CD4-positive, alpha-beta memory T cell (primary cell): ENCODE measurements at regions of chr1 and their contacts with region 1.

Region 1: GRCh38 chr1:169694304-169695075 is 16.9 kb downstream of the SELL start:
- DNase-seq: peak; percentile 76 to 84 (median 79)
- H3K4me3 ChIP-seq: no peak overlapping the region
- H3K4me3 Mint-ChIP-seq: peak overlapping the region; percentile 55 to 83 (median 68)
- H3K27ac ChIP-seq: peak overlapping the region; percentile 43
- H3K27ac Mint-ChIP-seq: peak overlapping the region in 6 of 7 donors; percentile 90 to 95 (median 92)
- H3K4me1 ChIP-seq: peaks cover 99% of the 10 kb centered on the region
- H3K4me1 Mint-ChIP-seq: peaks cover 81 to 97% (median 88%) of the 10 kb centered on the region in 4 donors
- H3K27me3 ChIP-seq: no peaks in the 10 kb centered on the region
- H3K27me3 Mint-ChIP-seq: no peaks in the 10 kb centered on the region

Region 2: GRCh38 chr1:167849666-167850065 is 1844.8 kb before region 1 on chr1:
- CTCF ChIA-PET with region 1: no interaction called
- POLR2A ChIA-PET with region 1: no interaction called
- intact Hi-C with region 1: no loop called
- DNase-seq: no peak
- H3K4me3 ChIP-seq: no peak overlapping the region
- H3K4me3 Mint-ChIP-seq: no peak overlapping the region
- H3K27ac ChIP-seq: no peak overlapping the region
- H3K27ac Mint-ChIP-seq: no peak overlapping the region
- H3K4me1 ChIP-seq: no peaks in the 10 kb centered on the region
- H3K4me1 Mint-ChIP-seq: no peaks in the 10 kb centered on the region
- H3K27me3 ChIP-seq: no peaks in the 10 kb centered on the region
- H3K27me3 Mint-ChIP-seq: peaks cover 0 to 5% of the 10 kb centered on the region in 2 donors

Region 3: GRCh38 chr1:169106095-169106920 is 588.2 kb before region 1 on chr1 and contains the start of gene ATP1B1:
- CTCF ChIA-PET with region 1: no interaction called
- POLR2A ChIA-PET with region 1: no interaction called
- intact Hi-C with region 1: no loop called
- DNase-seq: peak; percentile 72 to 84 (median 78)
- H3K4me3 ChIP-seq: peak within 1 kb of the TSS; percentile 57 to 70
- H3K4me3 Mint-ChIP-seq: peak within 1 kb of the TSS; percentile 78 to 97 (median 90)
- H3K27ac ChIP-seq: peak within 1 kb of the TSS; percentile 23
- H3K27ac Mint-ChIP-seq: peak within 1 kb of the TSS; percentile 58 to 88 (median 78)
- H3K4me1 ChIP-seq: peaks cover 27% of the 10 kb centered on the region
- H3K4me1 Mint-ChIP-seq: peaks cover 20 to 49% (median 34%) of the 10 kb centered on the region in 4 donors
- H3K27me3 ChIP-seq: no peaks in the 10 kb centered on the region
- H3K27me3 Mint-ChIP-seq: peaks cover 2 to 4% of the 10 kb centered on the region in 2 donors
- total RNA-seq, gene ATP1B1: 3.3 to 3.5 TPM

Region 4: GRCh38 chr1:169485544-169486278 is 208.8 kb before region 1 on chr1 and contains the start of gene SLC19A2:
- CTCF ChIA-PET with region 1: no interaction called
- POLR2A ChIA-PET with region 1: interaction called, 4 read pairs
- intact Hi-C with region 1: loop called (anchors 10 kb)
- DNase-seq: peak; percentile 89 to 96 (median 91)
- H3K4me3 ChIP-seq: peak within 1 kb of the TSS; percentile 60 to 63
- H3K4me3 Mint-ChIP-seq: peak within 1 kb of the TSS; percentile 93 to 97 (median 95)
- H3K27ac ChIP-seq: peak within 1 kb of the TSS; percentile 73
- H3K27ac Mint-ChIP-seq: peak within 1 kb of the TSS; percentile 88 to 96 (median 94)
- H3K4me1 ChIP-seq: peaks cover 20% of the 10 kb centered on the region
- H3K4me1 Mint-ChIP-seq: peaks cover 28 to 37% (median 30%) of the 10 kb centered on the region in 4 donors
- H3K27me3 ChIP-seq: no peaks in the 10 kb centered on the region
- H3K27me3 Mint-ChIP-seq: no peaks in the 10 kb centered on the region
- total RNA-seq, gene SLC19A2: 4.1 to 4.5 TPM

Region 5: DNA sequence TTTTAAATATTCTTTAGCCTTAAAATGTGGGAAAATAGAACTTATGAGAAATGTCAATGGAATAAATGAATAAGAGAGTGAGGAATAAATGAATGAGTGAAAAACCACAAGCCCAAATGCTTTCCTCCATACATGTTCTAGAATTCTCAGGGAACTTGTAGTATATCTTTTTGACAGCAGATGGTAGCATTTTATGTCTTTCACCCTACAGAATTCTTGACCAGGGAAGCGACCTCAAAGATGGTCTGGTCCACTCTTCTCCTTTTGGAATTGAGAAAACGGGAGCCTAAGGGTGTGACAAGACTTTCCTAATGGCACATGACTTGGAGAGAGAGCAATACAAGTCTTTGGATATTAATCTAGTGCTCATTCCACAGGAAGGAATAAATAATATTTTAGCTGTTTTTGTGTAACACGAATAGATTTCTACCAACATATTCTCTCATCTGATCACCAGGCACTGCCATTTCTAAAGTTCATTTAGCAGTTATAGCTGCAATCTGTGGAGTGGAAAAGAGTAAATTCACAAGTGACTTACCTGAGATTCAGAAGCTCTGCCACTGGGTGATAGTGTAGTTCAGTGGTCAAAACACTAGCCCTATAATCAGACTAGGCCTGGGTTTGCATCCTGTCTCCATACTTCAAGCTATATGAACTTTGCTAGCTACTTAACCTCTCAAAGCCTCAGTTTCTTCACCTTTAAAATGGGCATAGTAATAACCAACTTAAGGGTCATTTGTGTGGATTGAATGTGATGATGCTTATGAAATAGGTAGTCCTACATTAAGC is 93.2 kb before region 1 on chr1:
- CTCF ChIA-PET with region 1: interaction called, 209 read pairs
- POLR2A ChIA-PET with region 1: interaction called, 216 read pairs
- intact Hi-C with region 1: loop called (anchors 1 kb)
- DNase-seq: peak in 4 of 5 donors; percentile 21 to 34 (median 30)
- H3K4me3 ChIP-seq: no peak overlapping the region
- H3K4me3 Mint-ChIP-seq: peak overlapping the region in 4 of 8 donors; percentile 15 to 66 (median 20)
- H3K27ac ChIP-seq: no peak overlapping the region
- H3K27ac Mint-ChIP-seq: peak overlapping the region; percentile 39 to 86 (median 67)
- H3K4me1 ChIP-seq: peaks cover 53% of the 10 kb centered on the region
- H3K4me1 Mint-ChIP-seq: peaks cover 38 to 58% (median 49%) of the 10 kb centered on the region in 4 donors
- H3K27me3 ChIP-seq: no peaks in the 10 kb centered on the region
- H3K27me3 Mint-ChIP-seq: no peaks in the 10 kb centered on the region

Region 6: DNA sequence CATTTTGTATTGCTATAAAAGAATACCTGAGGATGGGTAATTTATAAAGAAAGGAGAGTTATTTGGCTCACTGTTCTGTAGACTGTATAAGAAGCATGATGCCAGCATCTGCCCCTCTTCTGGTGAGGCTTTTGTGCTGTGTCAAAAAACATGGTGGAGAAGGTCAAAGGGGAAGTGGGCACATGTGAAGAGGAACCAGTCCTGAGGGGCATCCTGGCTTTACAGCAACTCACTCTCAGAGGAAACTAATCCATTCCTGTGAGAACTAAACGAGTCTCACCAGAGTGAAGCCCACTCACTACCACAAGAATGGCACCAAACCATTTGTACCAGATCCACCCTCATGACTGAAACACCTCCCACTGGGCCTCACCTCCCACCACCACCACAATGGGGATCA is 45.8 kb before region 1 on chr1:
- CTCF ChIA-PET with region 1: interaction called, 4 read pairs
- POLR2A ChIA-PET with region 1: interaction called, 6 read pairs
- intact Hi-C with region 1: loop called (anchors 2 kb)
- DNase-seq: no peak
- H3K4me3 ChIP-seq: no peak overlapping the region
- H3K4me3 Mint-ChIP-seq: peak overlapping the region; percentile 8 to 81 (median 72)
- H3K27ac ChIP-seq: peak overlapping the region; percentile 1
- H3K27ac Mint-ChIP-seq: peak overlapping the region; percentile 69 to 95 (median 87)
- H3K4me1 ChIP-seq: peaks cover 36% of the 10 kb centered on the region
- H3K4me1 Mint-ChIP-seq: peaks cover 37 to 49% (median 44%) of the 10 kb centered on the region in 4 donors
- H3K27me3 ChIP-seq: no peaks in the 10 kb centered on the region
- H3K27me3 Mint-ChIP-seq: no peaks in the 10 kb centered on the region

Region 7: GRCh38 chr1:169794530-169795416 is 100.3 kb after region 1 on chr1 and contains the start of gene METTL18:
- CTCF ChIA-PET with region 1: no interaction called
- POLR2A ChIA-PET with region 1: interaction called, 9 read pairs
- intact Hi-C with region 1: loop called (anchors 1 kb)
- DNase-seq: peak; percentile 92 to 95 (median 93)
- H3K4me3 ChIP-seq: peak within 1 kb of the TSS; percentile 90 to 93
- H3K4me3 Mint-ChIP-seq: peak within 1 kb of the TSS; percentile 96 to 100 (median 98)
- H3K27ac ChIP-seq: peak within 1 kb of the TSS; percentile 93
- H3K27ac Mint-ChIP-seq: peak within 1 kb of the TSS; percentile 90 to 100 (median 99)
- H3K4me1 ChIP-seq: peaks cover 30% of the 10 kb centered on the region
- H3K4me1 Mint-ChIP-seq: peaks cover 36 to 56% (median 48%) of the 10 kb centered on the region in 4 donors
- H3K27me3 ChIP-seq: no peaks in the 10 kb centered on the region
- H3K27me3 Mint-ChIP-seq: no peaks in the 10 kb centered on the region
- total RNA-seq, gene METTL18: 21.0 to 23.8 TPM

Region 8: GRCh38 chr1:170145061-170145460 is 450.6 kb after region 1 on chr1:
- CTCF ChIA-PET with region 1: no interaction called
- POLR2A ChIA-PET with region 1: no interaction called
- intact Hi-C with region 1: no loop called
- DNase-seq: no peak
- H3K4me3 ChIP-seq: no peak overlapping the region
- H3K4me3 Mint-ChIP-seq: no peak overlapping the region
- H3K27ac ChIP-seq: no peak overlapping the region
- H3K27ac Mint-ChIP-seq: peak overlapping the region in 1 of 7 donors; percentile 54
- H3K4me1 ChIP-seq: no peaks in the 10 kb centered on the region
- H3K4me1 Mint-ChIP-seq: peaks cover 0 to 4% (median 0%) of the 10 kb centered on the region in 4 donors
- H3K27me3 ChIP-seq: no peaks in the 10 kb centered on the region
- H3K27me3 Mint-ChIP-seq: peaks cover 12 to 13% of the 10 kb centered on the region in 2 donors